Caco-2 (cell line): ENCODE measurements at regions of chr16 and their contacts with region 1.

Region 1: GRCh38 chr16:53773150-53773846 is 69.3 kb downstream of the FTO start:
- DNase-seq: peak; percentile 71 to 77
- H3K4me3 ChIP-seq: no peak overlapping the region
- H3K4me3 Mint-ChIP-seq: no peak overlapping the region
- H3K27ac Mint-ChIP-seq: no peak overlapping the region
- H3K4me1 ChIP-seq: peaks cover 74% of the 10 kb centered on the region
- H3K4me1 Mint-ChIP-seq: peaks cover 26% of the 10 kb centered on the region
- H3K27me3 ChIP-seq: no peaks in the 10 kb centered on the region
- H3K27me3 Mint-ChIP-seq: no peaks in the 10 kb centered on the region
- CTCF ChIP-seq: peak; percentile 76 to 87

Region 2: GRCh38 chr16:53692142-53692541 is 81.2 kb before region 1 on chr16:
- CTCF ChIA-PET with region 1: interaction called, 6 read pairs
- POLR2A ChIA-PET with region 1: no interaction called
- intact Hi-C with region 1: loop called (anchors 2 kb)
- DNase-seq: peak; percentile 58 to 73
- H3K4me3 ChIP-seq: no peak overlapping the region
- H3K4me3 Mint-ChIP-seq: no peak overlapping the region
- H3K27ac Mint-ChIP-seq: no peak overlapping the region
- H3K4me1 ChIP-seq: peaks cover 3% of the 10 kb centered on the region; the same call in 1 of the 2 replicates
- H3K4me1 Mint-ChIP-seq: no peaks in the 10 kb centered on the region
- H3K27me3 ChIP-seq: no peaks in the 10 kb centered on the region
- H3K27me3 Mint-ChIP-seq: no peaks in the 10 kb centered on the region
- CTCF ChIP-seq: peak; percentile 74 to 75

Region 3: DNA sequence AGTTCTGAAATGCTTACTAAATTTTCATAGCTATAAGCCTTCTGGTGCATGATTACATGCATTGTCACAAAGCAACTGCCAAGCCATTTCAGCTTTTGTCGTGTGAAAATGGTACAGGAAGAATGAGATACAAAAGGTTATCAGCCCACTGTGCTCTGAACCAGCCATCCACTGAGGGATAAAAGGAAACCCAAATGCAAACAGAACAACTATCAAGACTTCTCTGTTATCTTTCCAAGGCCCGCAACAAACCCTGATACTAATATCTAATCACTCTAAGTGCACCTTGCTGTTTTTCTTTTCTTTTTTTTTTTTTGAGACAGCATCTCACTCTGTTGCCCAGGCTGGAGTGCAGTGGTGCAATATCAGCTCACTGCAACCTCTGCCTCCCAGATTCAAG is 39.6 kb after region 1 on chr16:
- CTCF ChIA-PET with region 1: interaction called, 3 read pairs
- POLR2A ChIA-PET with region 1: no interaction called
- intact Hi-C with region 1: loop called (anchors 1 kb)
- DNase-seq: peak; percentile 48 to 56
- H3K4me3 ChIP-seq: no peak overlapping the region
- H3K4me3 Mint-ChIP-seq: no peak overlapping the region
- H3K27ac Mint-ChIP-seq: no peak overlapping the region
- H3K4me1 ChIP-seq: peaks cover 35% of the 10 kb centered on the region
- H3K4me1 Mint-ChIP-seq: peaks cover 49% of the 10 kb centered on the region
- H3K27me3 ChIP-seq: no peaks in the 10 kb centered on the region; the same call in 1 of the 2 replicates
- H3K27me3 Mint-ChIP-seq: no peaks in the 10 kb centered on the region
- CTCF ChIP-seq: no peak

Region 4: GRCh38 chr16:53937161-53937880 is 164.0 kb after region 1 on chr16:
- CTCF ChIA-PET with region 1: no interaction called
- POLR2A ChIA-PET with region 1: no interaction called
- intact Hi-C with region 1: loop called (anchors 2 kb)
- DNase-seq: peak; percentile 40 to 70
- H3K4me3 ChIP-seq: no peak overlapping the region
- H3K4me3 Mint-ChIP-seq: no peak overlapping the region
- H3K27ac Mint-ChIP-seq: peak overlapping the region; percentile 7
- H3K4me1 ChIP-seq: peaks cover 31% of the 10 kb centered on the region
- H3K4me1 Mint-ChIP-seq: peaks cover 33% of the 10 kb centered on the region
- H3K27me3 ChIP-seq: no peaks in the 10 kb centered on the region
- H3K27me3 Mint-ChIP-seq: no peaks in the 10 kb centered on the region
- CTCF ChIP-seq: no peak

Region 5: DNA sequence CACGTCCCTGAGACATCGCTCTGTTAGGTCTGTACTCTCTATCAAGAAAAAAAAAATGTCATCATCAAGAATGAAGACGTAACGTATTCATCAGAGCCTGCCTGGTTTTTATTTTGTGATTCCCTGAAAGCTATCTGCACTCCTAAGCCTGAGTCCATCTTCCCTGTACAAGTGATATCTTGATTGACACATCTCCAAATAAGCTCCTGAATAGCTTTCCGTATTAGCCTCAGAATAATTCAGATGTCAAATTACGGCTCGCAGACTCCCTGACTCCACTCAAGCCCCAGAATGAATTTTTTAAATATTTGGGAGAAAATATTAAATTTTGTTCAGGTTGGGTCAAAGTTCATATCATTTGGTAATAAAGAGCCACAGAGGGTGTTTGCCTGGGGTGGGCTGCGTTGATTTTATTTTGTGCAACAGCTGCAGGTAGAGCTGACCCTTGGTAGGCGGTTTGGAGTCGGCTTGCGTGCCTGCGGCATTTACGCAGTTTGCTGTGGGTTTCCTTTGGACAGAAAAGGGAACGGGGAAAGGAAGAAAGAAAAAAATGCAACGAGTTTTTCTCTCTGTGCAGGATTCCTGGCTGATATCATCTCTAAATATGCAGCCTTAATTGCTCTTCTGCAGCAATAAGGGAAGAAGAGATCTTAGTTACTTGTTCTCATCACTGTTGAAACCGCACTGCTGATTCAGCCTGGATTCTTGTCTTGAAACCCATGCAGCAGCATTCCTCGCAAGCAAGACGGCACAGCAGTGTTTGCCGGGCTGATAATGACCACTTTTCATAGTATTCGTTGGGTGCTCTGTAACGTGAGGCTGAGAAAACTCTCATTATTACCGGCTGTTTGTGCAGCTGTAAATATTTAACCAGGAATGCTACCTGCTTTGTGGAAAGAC is 398.6 kb after region 1 on chr16:
- CTCF ChIA-PET with region 1: interaction called, 4 read pairs
- POLR2A ChIA-PET with region 1: no interaction called
- intact Hi-C with region 1: loop called (anchors 2 kb)
- DNase-seq: peak; percentile 69 to 76
- H3K4me3 ChIP-seq: peak overlapping the region; percentile 22
- H3K4me3 Mint-ChIP-seq: peak overlapping the region; percentile 54
- H3K27ac Mint-ChIP-seq: no peak overlapping the region
- H3K4me1 ChIP-seq: peaks cover 48% of the 10 kb centered on the region
- H3K4me1 Mint-ChIP-seq: peaks cover 39% of the 10 kb centered on the region
- H3K27me3 ChIP-seq: no peaks in the 10 kb centered on the region
- H3K27me3 Mint-ChIP-seq: no peaks in the 10 kb centered on the region
- CTCF ChIP-seq: no peak

Region 6: DNA sequence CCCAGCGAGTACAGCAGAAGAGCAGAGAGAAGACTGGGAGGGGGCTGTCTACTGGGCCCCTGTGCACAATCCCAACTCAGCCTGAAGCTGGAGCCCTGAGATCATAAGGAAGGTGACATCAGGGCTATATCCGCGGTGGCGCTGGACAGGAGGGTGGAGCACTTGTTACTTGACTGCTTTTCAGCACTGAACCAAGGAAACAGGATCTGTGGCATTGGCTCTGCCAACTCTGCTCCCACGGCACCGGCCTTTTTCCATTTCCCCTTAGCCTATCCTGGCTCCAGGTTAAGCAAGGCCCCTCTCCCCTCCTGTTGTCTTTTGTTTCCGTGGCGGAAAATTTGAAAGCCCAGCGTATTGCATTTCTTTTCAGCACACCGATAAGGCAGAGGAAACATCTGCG is 638.2 kb after region 1 on chr16:
- CTCF ChIA-PET with region 1: no interaction called
- POLR2A ChIA-PET with region 1: no interaction called
- intact Hi-C with region 1: loop called (anchors 10 kb)
- DNase-seq: no peak
- H3K4me3 ChIP-seq: no peak overlapping the region
- H3K4me3 Mint-ChIP-seq: no peak overlapping the region
- H3K27ac Mint-ChIP-seq: peak overlapping the region; percentile 65
- H3K4me1 ChIP-seq: no peaks in the 10 kb centered on the region
- H3K4me1 Mint-ChIP-seq: peaks cover 7% of the 10 kb centered on the region
- H3K27me3 ChIP-seq: no peaks in the 10 kb centered on the region
- H3K27me3 Mint-ChIP-seq: no peaks in the 10 kb centered on the region
- CTCF ChIP-seq: no peak

Region 7: GRCh38 chr16:54929090-54930004 is 1156.0 kb after region 1 on chr16:
- CTCF ChIA-PET with region 1: no interaction called
- POLR2A ChIA-PET with region 1: interaction called, 5 read pairs
- intact Hi-C with region 1: loop called (anchors 5 kb)
- DNase-seq: peak; percentile 100
- H3K4me3 ChIP-seq: peak overlapping the region; percentile 76
- H3K4me3 Mint-ChIP-seq: peak overlapping the region; percentile 96
- H3K27ac Mint-ChIP-seq: peak overlapping the region; percentile 89
- H3K4me1 ChIP-seq: peaks cover 24% of the 10 kb centered on the region
- H3K4me1 Mint-ChIP-seq: peaks cover 27% of the 10 kb centered on the region
- H3K27me3 ChIP-seq: no peaks in the 10 kb centered on the region
- H3K27me3 Mint-ChIP-seq: no peaks in the 10 kb centered on the region
- CTCF ChIP-seq: peak in 1 of 2 experiments; percentile 23